ENCODE measurements at regions of chr11 and their contacts with region 1.

Region 1: DNA sequence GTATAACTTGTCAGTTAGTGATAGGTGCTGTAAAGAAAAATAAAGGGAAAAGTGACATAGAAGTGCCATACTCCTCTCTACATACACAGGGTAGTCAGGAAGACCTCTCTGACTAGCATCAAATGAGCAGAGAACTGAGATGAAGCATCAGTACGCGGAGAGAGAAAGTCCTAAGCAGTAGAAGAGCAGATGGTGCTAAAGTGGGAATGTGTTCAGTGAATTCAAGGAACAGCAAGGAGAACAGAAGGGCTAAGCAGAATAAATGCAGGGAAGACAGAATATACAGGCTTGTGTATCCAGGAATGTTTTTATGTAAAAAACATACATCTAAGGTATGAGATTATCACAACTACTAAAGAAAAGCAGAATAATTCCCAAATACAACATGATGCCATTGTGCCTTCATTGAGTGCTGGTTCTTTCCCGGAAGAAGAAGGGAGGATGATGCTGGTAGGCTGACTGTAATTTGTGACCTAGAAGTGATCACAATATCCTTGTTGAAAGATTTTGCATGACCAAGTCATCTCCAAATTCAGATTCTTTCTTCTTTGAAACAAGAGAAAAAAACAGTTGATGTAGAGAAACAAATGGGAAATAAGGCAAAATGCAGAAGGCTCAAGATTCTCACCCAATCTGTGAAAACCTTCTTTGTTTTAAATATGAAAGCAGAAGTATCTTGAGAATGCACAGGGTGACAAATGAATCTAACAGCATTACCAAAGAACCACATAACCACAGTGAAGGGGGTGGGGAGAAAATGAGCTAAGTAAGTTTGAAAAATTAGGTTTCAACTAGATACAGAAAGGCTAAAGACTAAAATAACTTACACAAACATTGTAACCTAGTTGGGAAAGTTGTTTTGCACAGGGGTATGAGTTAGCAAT is 20.5 kb downstream of the MRE11 start:
- DNase-seq: no peak
- ATAC-seq: no peak
- H3K4me3 ChIP-seq: no peak overlapping the region
- H3K27ac ChIP-seq: peak overlapping the region in 1 of 12 donors; percentile 10
- H3K4me1 ChIP-seq: peaks cover 0 to 14% (median 0%) of the 10 kb centered on the region in 12 donors
- H3K27me3 ChIP-seq: no peaks in the 10 kb centered on the region
- CTCF ChIP-seq: no peak
- POLR2A ChIP-seq: no peak

Region 2: GRCh38 chr11:93694109-93694508 is 779.0 kb before region 1 on chr11:
- intact Hi-C with region 1: no loop called
- DNase-seq: no peak
- ATAC-seq: no peak
- H3K4me3 ChIP-seq: no peak overlapping the region
- H3K27ac ChIP-seq: no peak overlapping the region
- H3K4me1 ChIP-seq: no peaks in the 10 kb centered on the region
- H3K27me3 ChIP-seq: no peaks in the 10 kb centered on the region
- CTCF ChIP-seq: no peak
- POLR2A ChIP-seq: no peak

Region 3: GRCh38 chr11:94100253-94100652 is 372.9 kb before region 1 on chr11:
- intact Hi-C with region 1: no loop called
- DNase-seq: no peak
- ATAC-seq: no peak
- H3K4me3 ChIP-seq: no peak overlapping the region
- H3K27ac ChIP-seq: no peak overlapping the region
- H3K4me1 ChIP-seq: no peaks in the 10 kb centered on the region
- H3K27me3 ChIP-seq: no peaks in the 10 kb centered on the region
- CTCF ChIP-seq: no peak
- POLR2A ChIP-seq: no peak

Region 4: DNA sequence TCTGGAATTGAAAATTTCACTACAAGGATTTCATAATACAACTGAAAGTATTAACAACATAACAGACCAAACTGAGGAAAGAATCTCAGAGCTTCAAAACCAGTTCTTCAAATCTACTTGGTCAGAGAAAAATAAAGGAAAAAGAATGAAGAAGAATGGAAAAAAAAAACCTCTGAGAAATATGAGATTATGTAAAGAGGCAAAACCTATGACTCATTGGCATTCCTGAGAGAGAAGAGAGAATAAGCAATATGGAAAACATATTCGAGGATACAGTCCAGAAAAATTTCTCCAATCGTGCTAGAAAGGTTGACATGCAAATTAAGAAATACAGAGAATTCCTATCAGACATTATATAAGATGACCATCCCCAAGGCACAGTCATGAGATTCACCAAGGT is 48.5 kb before region 1 on chr11:
- intact Hi-C with region 1: loop called in 1 of 10 experiments (anchors 2 kb)
- DNase-seq: no peak
- ATAC-seq: no peak
- H3K4me3 ChIP-seq: no peak overlapping the region
- H3K27ac ChIP-seq: no peak overlapping the region
- H3K4me1 ChIP-seq: no peaks in the 10 kb centered on the region
- H3K27me3 ChIP-seq: no peaks in the 10 kb centered on the region
- CTCF ChIP-seq: no peak
- POLR2A ChIP-seq: no peak

Measured in heart left ventricle (tissue), 16 donors.